OCI-LY7 (cell line): ENCODE measurements at regions of chr9 and their contacts with region 1.

Region 1: GRCh38 chr9:110143950-110144545 is 63.9 kb downstream of the C9orf152 start:
- DNase-seq: peak; percentile 87
- H3K4me3 ChIP-seq: peak overlapping the region; percentile 50
- H3K27ac ChIP-seq: peak overlapping the region; percentile 97
- H3K4me1 ChIP-seq: peaks cover 83% of the 10 kb centered on the region
- CTCF ChIP-seq: peak; percentile 54; the same call in 1 of the 2 replicates

Region 2: GRCh38 chr9:109918339-109919163 is 225.5 kb before region 1 on chr9:
- CTCF ChIA-PET with region 1: interaction called, 4 read pairs
- POLR2A ChIA-PET with region 1: interaction called, 215 read pairs
- intact Hi-C with region 1: loop called (anchors 1 kb)
- DNase-seq: peak; percentile 96
- H3K4me3 ChIP-seq: peak overlapping the region; percentile 49
- H3K27ac ChIP-seq: peak overlapping the region; percentile 98
- H3K4me1 ChIP-seq: peaks cover 97% of the 10 kb centered on the region
- CTCF ChIP-seq: no peak

Region 3: GRCh38 chr9:109972026-109972882 is 171.8 kb before region 1 on chr9:
- CTCF ChIA-PET with region 1: interaction called, 11 read pairs
- POLR2A ChIA-PET with region 1: interaction called, 75 read pairs
- intact Hi-C with region 1: loop called (anchors 1 kb)
- DNase-seq: peak; percentile 94
- H3K4me3 ChIP-seq: peak overlapping the region; percentile 37
- H3K27ac ChIP-seq: peak overlapping the region; percentile 98
- H3K4me1 ChIP-seq: peaks cover 100% of the 10 kb centered on the region
- CTCF ChIP-seq: peak; percentile 87

Region 4: DNA sequence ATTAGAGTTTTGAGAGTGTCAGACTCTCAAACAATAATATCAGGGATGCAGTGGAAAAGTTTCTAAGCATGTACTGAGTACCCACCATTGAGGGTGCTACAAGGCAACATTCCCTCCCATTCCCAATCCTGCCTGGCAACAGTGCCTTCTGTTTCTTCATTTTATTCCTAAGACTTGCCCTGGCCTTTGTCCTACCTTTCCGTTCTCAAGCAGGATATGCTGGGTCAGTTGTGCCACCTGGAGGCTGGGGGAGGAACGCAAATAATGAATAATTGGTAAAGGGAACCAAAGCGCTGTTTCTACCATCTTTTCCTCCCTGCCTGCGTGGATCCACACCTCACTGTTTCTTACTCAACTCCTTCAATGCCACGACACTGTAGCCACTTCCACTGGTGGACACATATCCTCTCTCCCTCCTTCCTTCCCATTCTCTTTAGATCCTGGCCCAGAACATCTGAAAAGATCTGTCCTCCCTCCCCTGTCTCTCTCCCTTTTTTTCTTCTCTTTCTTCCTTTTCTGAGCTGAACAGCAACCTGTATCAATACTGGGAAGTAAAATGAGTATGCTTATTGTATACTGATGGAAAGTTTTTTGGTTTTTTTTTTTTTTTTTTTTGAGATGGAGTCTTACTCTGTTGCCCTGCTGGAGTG is 85.6 kb before region 1 on chr9:
- CTCF ChIA-PET with region 1: interaction called, 3 read pairs
- POLR2A ChIA-PET with region 1: interaction called, 13 read pairs
- intact Hi-C with region 1: loop called (anchors 2 kb)
- DNase-seq: peak; percentile 70
- H3K4me3 ChIP-seq: peak overlapping the region; percentile 23
- H3K27ac ChIP-seq: peak overlapping the region; percentile 48
- H3K4me1 ChIP-seq: peaks cover 44% of the 10 kb centered on the region
- CTCF ChIP-seq: peak; percentile 89

Region 5: DNA sequence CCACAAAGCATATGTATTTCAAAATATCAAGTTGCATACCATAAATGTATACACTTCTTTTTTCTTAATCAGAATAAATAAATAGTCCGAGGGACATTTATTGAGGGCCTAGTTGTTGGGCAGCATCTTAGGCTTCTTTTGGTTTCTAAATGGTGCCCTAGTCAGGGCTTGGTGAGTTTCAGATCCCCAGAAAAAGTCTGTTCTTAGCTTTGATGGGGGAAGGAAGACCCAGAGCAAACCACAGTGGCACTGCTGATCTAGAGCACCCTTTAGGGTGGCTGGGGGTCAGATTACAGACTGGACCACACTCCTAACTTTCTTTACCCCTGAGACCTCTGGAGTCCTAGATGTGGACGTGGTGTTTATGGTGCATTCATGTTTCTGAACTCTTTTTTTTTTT is 33.9 kb before region 1 on chr9:
- CTCF ChIA-PET with region 1: interaction called, 13 read pairs
- POLR2A ChIA-PET with region 1: interaction called, 31 read pairs
- intact Hi-C with region 1: loop called (anchors 1 kb)
- DNase-seq: peak; percentile 72
- H3K4me3 ChIP-seq: peak overlapping the region; percentile 46
- H3K27ac ChIP-seq: peak overlapping the region; percentile 64
- H3K4me1 ChIP-seq: peaks cover 79% of the 10 kb centered on the region
- CTCF ChIP-seq: no peak

Region 6: DNA sequence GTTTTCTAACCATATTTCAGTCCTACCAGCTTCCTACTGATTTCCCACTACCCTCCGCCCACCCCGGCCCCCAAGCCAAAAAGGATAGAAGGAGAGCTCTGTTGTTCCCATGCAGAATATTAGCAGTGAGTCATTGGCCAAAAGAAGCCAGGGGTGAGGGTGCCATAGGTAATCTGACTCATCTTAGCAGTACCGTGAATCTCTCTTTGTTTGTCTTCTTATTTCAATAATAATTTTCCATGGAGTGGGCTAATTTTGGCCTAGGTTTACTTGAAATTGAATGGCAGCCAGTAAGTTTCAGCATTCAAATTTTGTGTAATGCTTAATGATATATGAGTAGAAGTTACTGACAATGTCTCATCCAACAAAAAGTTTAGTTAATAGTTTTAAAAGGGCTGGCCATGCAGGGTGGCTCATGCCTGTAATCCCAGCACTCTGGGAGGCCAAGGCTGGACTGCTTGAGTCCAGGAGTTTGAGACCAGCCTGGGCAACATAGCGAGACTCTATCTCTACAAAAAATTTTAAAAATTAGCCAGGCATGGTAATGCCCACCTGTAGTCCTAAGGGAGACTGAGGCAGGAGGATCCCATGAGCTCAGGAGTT is 10.3 kb before region 1 on chr9:
- CTCF ChIA-PET with region 1: interaction called, 37 read pairs
- POLR2A ChIA-PET with region 1: interaction called, 133 read pairs
- intact Hi-C with region 1: loop called (anchors 2 kb)
- DNase-seq: no peak
- H3K4me3 ChIP-seq: no peak overlapping the region
- H3K27ac ChIP-seq: peak overlapping the region; percentile 95
- H3K4me1 ChIP-seq: peaks cover 60% of the 10 kb centered on the region
- CTCF ChIP-seq: no peak